IMR-90 (cell line): ENCODE measurements at regions of chr9 and their contacts with region 1.

Region 1: DNA sequence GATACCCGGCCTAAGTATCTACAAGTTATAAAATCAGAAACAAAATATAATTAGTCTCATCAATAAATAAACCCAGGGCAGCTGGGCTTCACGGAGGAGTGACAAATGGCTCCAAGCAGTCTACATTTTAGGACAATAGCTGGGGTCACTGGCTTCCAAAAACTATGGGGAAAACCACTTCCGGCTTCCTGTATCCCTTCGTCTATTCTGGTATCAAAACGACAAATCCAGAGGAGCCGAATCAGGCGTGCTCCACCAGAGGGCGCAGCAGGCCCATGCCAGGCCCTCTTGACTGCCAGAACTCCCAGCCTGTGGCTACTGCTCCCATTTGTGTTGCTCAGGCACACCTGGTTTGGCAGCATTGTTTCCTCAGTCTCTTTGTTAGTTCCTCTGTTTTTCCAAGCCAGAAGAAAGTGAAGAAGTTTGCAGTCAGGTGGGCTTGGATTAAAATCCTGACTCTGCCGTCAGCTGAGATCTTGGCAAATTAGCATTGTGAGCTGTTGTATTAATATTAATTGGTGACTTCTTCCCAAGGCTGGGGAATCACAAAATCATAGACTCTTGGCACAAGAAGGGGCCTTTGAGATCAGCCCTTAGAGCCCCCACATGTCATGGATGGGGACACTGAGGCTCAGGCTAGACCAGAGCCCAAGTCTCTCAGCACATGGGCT is 11.6 kb upstream of the RAB14 start:
- DNase-seq: peak; percentile 85
- ATAC-seq: peak; percentile 99
- H3K4me3 ChIP-seq: no peak overlapping the region
- H3K27ac ChIP-seq: 0 out of 2 replicates have a peak overlapping the region, but pooled peaks have one; percentile 15
- H3K4me1 ChIP-seq: no peaks in the 10 kb centered on the region
- H3K27me3 ChIP-seq: no peaks in the 10 kb centered on the region
- CTCF ChIP-seq: peak; percentile 98
- POLR2A ChIP-seq: 0 out of 2 replicates have a peak, but pooled peaks have one; percentile 55
- RAD21 ChIP-seq: peak; percentile 100

Region 2: DNA sequence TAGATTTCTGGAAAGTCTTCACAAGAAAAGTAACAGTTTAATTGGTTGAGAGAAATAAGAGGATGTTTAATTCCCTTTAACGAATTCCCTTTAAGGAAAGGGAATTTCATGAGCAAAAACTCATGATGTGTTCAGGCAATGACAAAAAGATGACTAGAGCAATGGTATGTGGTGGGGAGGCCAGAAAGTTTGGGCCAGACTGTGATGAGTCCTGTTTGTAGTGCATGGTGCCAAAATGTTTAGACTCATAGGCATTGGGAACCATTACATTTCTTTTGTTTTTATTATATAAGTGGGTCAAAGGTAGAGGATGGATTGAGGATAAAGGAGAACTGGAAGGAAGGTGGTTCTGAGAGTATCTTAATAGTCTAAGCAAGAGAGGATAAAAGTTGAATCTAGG is 127.6 kb before region 1 on chr9:
- CTCF ChIA-PET with region 1: no interaction called
- POLR2A ChIA-PET with region 1: no interaction called
- dilution Hi-C with region 1: no loop called
- in situ Hi-C with region 1: no loop called
- intact Hi-C with region 1: no loop called
- DNase-seq: peak; percentile 61
- ATAC-seq: no peak
- H3K4me3 ChIP-seq: no peak overlapping the region
- H3K27ac ChIP-seq: no peak overlapping the region
- H3K4me1 ChIP-seq: peaks cover 2% of the 10 kb centered on the region; the same call in 1 of the 2 replicates
- H3K27me3 ChIP-seq: no peaks in the 10 kb centered on the region
- CTCF ChIP-seq: no peak
- POLR2A ChIP-seq: no peak
- RAD21 ChIP-seq: no peak

Region 3: DNA sequence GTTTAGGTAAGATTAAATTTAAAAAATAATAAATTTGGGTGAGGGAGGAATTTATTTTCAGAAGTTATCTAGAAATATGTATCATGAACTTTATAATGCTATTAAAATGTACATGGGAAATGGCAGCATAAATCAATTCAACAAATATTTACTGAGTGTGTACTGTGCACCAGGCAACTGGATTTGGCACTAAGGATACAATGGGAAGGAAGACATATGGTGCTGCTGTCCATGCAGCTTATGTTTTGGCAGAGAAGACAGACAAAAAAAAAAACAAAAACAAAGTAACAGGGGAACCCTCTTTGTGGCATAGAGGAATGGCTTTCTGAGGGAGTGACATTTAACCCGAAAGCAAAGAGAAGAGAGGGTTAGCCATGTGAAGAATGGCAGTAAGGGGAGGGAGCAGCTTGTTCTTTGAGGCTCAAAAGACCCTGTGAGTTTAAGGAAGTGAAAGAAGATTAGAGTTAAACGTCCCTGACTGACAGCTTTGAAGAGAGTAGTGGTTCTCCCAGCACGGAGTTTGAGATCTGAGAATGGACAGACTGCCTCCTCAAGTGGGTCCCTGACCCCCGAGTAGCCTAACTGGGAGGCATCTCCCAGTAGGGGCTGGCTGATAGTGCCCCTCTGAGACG is 114.6 kb before region 1 on chr9:
- CTCF ChIA-PET with region 1: no interaction called
- POLR2A ChIA-PET with region 1: no interaction called
- dilution Hi-C with region 1: no loop called
- in situ Hi-C with region 1: no loop called
- intact Hi-C with region 1: no loop called
- DNase-seq: no peak
- ATAC-seq: no peak
- H3K4me3 ChIP-seq: no peak overlapping the region
- H3K27ac ChIP-seq: no peak overlapping the region
- H3K4me1 ChIP-seq: no peaks in the 10 kb centered on the region
- H3K27me3 ChIP-seq: no peaks in the 10 kb centered on the region
- CTCF ChIP-seq: no peak
- POLR2A ChIP-seq: no peak
- RAD21 ChIP-seq: no peak

Region 4: GRCh38 chr9:121121582-121122087 is 91.6 kb before region 1 on chr9:
- CTCF ChIA-PET with region 1: no interaction called
- POLR2A ChIA-PET with region 1: no interaction called
- dilution Hi-C with region 1: no loop called
- in situ Hi-C with region 1: no loop called
- intact Hi-C with region 1: no loop called
- DNase-seq: peak; percentile 94
- ATAC-seq: peak; percentile 100
- H3K4me3 ChIP-seq: peak overlapping the region; percentile 52
- H3K27ac ChIP-seq: no peak overlapping the region
- H3K4me1 ChIP-seq: peaks cover 2% of the 10 kb centered on the region
- H3K27me3 ChIP-seq: no peaks in the 10 kb centered on the region
- CTCF ChIP-seq: peak; percentile 29; the same call in 1 of the 2 replicates
- POLR2A ChIP-seq: no peak
- RAD21 ChIP-seq: peak; percentile 35; the same call in 1 of the 2 replicates

Region 5: GRCh38 chr9:121201738-121202533 is 11.3 kb before region 1 on chr9 and contains the start of gene RAB14:
- CTCF ChIA-PET with region 1: interaction called, 11 read pairs
- POLR2A ChIA-PET with region 1: no interaction called
- dilution Hi-C with region 1: no loop called
- in situ Hi-C with region 1: no loop called
- intact Hi-C with region 1: no loop called
- DNase-seq: peak; percentile 97
- ATAC-seq: peak; percentile 94
- H3K4me3 ChIP-seq: peak within 1 kb of the TSS; percentile 77
- H3K27ac ChIP-seq: peak within 1 kb of the TSS; percentile 90
- H3K4me1 ChIP-seq: peaks cover 7% of the 10 kb centered on the region
- H3K27me3 ChIP-seq: no peaks in the 10 kb centered on the region
- CTCF ChIP-seq: peak; percentile 53
- POLR2A ChIP-seq: peak; percentile 77
- RAD21 ChIP-seq: no peak
- total RNA-seq, gene RAB14: 20.1 and 36.1 TPM in 2 replicates

Region 6: GRCh38 chr9:121278535-121279261 is 65.4 kb after region 1 on chr9:
- CTCF ChIA-PET with region 1: interaction called, 5 read pairs
- POLR2A ChIA-PET with region 1: no interaction called
- dilution Hi-C with region 1: no loop called
- in situ Hi-C with region 1: no loop called
- intact Hi-C with region 1: loop called (anchors 2 kb)
- DNase-seq: peak; percentile 99
- ATAC-seq: peak; percentile 85
- H3K4me3 ChIP-seq: no peak overlapping the region
- H3K27ac ChIP-seq: peak overlapping the region; percentile 87
- H3K4me1 ChIP-seq: peaks cover 48% of the 10 kb centered on the region
- H3K27me3 ChIP-seq: no peaks in the 10 kb centered on the region
- CTCF ChIP-seq: peak; percentile 72
- POLR2A ChIP-seq: no peak; the same call in 1 of the 2 replicates
- RAD21 ChIP-seq: peak; percentile 65

Region 7: GRCh38 chr9:121322037-121322775 is 108.9 kb after region 1 on chr9:
- CTCF ChIA-PET with region 1: interaction called, 17 read pairs
- POLR2A ChIA-PET with region 1: no interaction called
- dilution Hi-C with region 1: no loop called
- in situ Hi-C with region 1: loop called (anchors 5 kb)
- intact Hi-C with region 1: loop called (anchors 1 kb)
- DNase-seq: peak; percentile 98
- ATAC-seq: peak; percentile 55
- H3K4me3 ChIP-seq: no peak overlapping the region
- H3K27ac ChIP-seq: peak overlapping the region; percentile 99
- H3K4me1 ChIP-seq: peaks cover 15% of the 10 kb centered on the region
- H3K27me3 ChIP-seq: no peaks in the 10 kb centered on the region
- CTCF ChIP-seq: no peak
- POLR2A ChIP-seq: no peak
- RAD21 ChIP-seq: no peak

Region 8: DNA sequence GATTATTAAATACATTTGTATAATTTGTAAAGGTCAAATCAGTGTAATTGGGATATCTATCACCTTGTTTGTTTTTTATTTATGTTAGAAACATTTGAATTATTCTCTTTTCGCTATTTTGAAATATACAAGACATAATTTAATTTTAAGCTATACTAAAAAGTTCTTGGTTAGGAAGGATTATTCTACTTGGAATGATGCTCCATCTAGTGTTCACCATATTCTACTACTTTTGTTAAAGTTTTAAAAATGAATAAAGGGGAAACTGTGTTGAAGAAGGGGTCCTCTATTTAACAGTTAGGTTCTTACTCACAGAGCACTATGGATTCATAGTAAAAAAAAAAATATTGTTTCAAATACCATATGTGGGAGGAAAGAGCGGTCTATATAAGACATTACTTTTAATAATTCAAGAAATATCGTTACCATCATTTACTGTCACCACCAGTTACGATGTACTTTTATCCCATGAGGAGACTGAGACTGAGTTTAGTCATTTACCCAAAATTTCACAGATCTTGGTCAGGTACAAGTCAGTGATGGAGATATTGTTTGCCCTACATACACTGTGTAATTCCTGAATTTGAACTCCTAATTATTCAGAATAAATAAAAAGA is 163.1 kb after region 1 on chr9:
- CTCF ChIA-PET with region 1: interaction called, 9 read pairs
- POLR2A ChIA-PET with region 1: interaction called, 4 read pairs
- dilution Hi-C with region 1: no loop called
- in situ Hi-C with region 1: no loop called
- intact Hi-C with region 1: loop called (anchors 2 kb)
- DNase-seq: peak; percentile 46
- ATAC-seq: no peak
- H3K4me3 ChIP-seq: no peak overlapping the region
- H3K27ac ChIP-seq: no peak overlapping the region
- H3K4me1 ChIP-seq: peaks cover 11% of the 10 kb centered on the region
- H3K27me3 ChIP-seq: no peaks in the 10 kb centered on the region
- CTCF ChIP-seq: peak; percentile 66
- POLR2A ChIP-seq: no peak
- RAD21 ChIP-seq: peak; percentile 58

Region 9: DNA sequence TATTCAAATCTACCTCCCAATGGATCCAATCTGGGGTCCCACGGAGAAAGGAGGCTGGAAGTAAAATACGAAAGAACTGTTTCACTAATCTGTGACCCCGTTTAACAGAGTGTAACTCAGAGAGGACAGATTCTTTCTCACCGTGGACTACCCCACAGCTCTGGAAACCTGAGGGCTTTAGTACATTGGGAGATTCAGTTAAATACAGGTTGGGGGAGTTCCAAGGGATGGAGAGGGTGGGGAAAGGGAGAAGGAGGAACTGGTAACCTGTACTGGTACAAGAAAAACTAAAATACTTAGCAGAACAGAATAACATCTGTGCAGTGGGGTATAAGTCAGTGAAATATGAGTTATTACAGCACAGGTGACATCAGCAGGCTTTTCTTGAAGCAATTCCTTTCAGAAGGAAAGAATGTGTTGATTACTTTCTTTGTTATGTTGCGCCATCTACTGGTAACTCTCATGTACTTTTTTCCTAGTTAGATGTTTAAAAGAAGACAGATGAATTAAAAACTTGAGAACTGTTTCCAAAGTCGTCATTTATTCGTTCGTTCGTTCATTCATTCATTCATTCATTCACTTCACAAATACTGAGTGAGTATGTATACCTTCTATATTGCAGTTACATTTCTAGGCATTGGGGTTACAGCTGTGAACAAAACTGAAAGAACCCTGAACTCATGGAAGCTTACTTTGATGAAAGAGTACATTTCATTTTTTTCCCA is 186.8 kb after region 1 on chr9:
- CTCF ChIA-PET with region 1: interaction called, 18 read pairs
- POLR2A ChIA-PET with region 1: no interaction called
- dilution Hi-C with region 1: no loop called
- in situ Hi-C with region 1: loop called (anchors 5 kb)
- intact Hi-C with region 1: loop called (anchors 1 kb)
- DNase-seq: peak; percentile 86
- ATAC-seq: peak; percentile 27
- H3K4me3 ChIP-seq: no peak overlapping the region
- H3K27ac ChIP-seq: no peak overlapping the region
- H3K4me1 ChIP-seq: peaks cover 11% of the 10 kb centered on the region
- H3K27me3 ChIP-seq: no peaks in the 10 kb centered on the region
- CTCF ChIP-seq: peak; percentile 81
- POLR2A ChIP-seq: no peak
- RAD21 ChIP-seq: peak; percentile 84

Region 10: DNA sequence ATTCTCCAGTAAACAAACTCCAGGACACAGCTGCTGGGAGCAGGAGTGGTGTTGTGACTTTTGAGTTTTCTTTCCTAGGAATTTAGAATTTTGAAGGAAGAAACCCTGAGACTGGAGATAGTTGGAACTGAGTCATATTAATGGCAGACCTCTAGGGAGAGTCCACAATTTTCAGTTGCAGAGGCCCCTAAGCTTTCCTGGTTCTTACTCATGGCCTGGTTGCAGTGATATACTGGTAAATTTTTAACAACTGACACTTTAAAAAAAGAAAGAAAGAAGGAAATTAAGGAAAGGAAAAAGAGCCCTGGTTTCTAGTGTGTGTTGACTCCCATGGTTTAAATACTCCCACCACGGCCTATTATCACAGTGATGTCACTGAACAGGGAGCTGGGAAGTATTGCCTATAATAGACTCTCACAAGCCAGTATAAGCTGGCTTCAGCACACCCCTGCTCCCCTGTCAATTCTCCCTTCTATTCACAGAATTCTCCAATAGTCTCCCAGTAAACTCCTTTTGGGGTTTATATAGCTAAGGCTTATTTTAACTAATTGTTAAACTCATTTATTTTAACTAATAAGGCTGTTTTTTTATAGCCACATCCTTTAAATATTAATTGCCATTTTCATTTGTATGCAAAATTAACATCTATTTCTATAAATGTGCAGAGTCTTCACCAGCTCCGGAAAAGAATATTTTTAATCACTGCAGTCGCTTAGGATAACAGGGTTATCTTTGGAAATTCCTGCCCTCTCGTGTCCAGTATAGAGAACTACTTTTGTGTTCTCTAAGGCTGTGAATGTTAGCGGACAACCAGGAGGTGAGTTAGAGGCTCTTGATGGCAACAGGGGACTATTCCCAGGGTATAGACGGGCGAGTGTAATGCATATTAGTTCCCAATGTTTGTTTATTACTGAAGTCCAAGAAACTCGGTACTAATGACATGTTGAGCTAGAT is 226.7 kb after region 1 on chr9:
- CTCF ChIA-PET with region 1: interaction called, 4 read pairs
- POLR2A ChIA-PET with region 1: no interaction called
- dilution Hi-C with region 1: no loop called
- in situ Hi-C with region 1: no loop called
- intact Hi-C with region 1: loop called (anchors 5 kb)
- DNase-seq: peak; percentile 54
- ATAC-seq: peak; percentile 92
- H3K4me3 ChIP-seq: no peak overlapping the region
- H3K27ac ChIP-seq: no peak overlapping the region
- H3K4me1 ChIP-seq: no peaks in the 10 kb centered on the region
- H3K27me3 ChIP-seq: peaks cover 43% of the 10 kb centered on the region
- CTCF ChIP-seq: peak; percentile 51
- POLR2A ChIP-seq: no peak
- RAD21 ChIP-seq: peak; percentile 49